ENCODE measurements at regions of chr1 and their contacts with region 1.

Region 1: DNA sequence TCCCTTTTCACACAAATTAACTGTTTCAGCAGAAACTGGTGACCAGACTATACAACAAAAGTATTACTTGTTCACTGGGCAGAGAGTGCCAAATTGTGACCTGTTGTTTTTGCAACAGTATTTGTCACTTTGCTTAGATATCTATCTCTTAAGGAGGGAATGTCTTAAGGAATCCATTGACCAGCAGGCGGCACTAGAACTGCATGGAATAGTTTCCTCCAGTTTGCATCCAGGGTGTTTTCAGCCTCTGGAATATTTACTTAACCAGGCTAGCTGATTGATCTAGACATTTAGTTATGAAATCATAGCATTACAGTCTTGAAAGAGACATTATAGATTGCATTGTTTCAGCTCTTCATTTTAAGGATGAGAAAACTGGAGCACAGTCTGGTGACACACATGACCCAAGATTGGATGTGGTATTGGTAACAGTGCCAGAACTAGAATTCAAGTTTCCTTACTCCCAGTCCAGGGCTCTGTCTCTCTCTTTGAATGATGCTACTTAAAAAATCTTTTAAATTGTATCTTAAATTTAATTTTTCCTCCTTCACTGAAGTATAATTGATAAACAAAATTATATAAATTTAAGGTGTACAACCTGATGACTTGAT is 16.9 kb downstream of the RPTN start:
- DNase-seq: peak; percentile 64 to 66
- H3K4me3 ChIP-seq: no peak overlapping the region
- H3K27ac ChIP-seq: no peak overlapping the region
- H3K4me1 ChIP-seq: no peaks in the 10 kb centered on the region
- H3K27me3 ChIP-seq: peaks cover 3% of the 10 kb centered on the region; the same call in 1 of the 2 replicates
- CTCF ChIP-seq: peak; percentile 92

Region 2: GRCh38 chr1:151968058-151968457 is 174.0 kb before region 1 on chr1:
- CTCF ChIA-PET with region 1: no interaction called
- POLR2A ChIA-PET with region 1: no interaction called
- intact Hi-C with region 1: no loop called
- DNase-seq: peak in 1 of 2 experiments; percentile 51
- H3K4me3 ChIP-seq: no peak overlapping the region
- H3K27ac ChIP-seq: no peak overlapping the region
- H3K4me1 ChIP-seq: peaks cover 60% of the 10 kb centered on the region
- H3K27me3 ChIP-seq: no peaks in the 10 kb centered on the region
- CTCF ChIP-seq: peak; percentile 70

Region 3: GRCh38 chr1:152198982-152199381 is 56.9 kb after region 1 on chr1:
- CTCF ChIA-PET with region 1: no interaction called
- POLR2A ChIA-PET with region 1: no interaction called
- intact Hi-C with region 1: no loop called
- DNase-seq: no peak
- H3K4me3 ChIP-seq: no peak overlapping the region
- H3K27ac ChIP-seq: no peak overlapping the region
- H3K4me1 ChIP-seq: no peaks in the 10 kb centered on the region
- H3K27me3 ChIP-seq: peaks cover 36% of the 10 kb centered on the region
- CTCF ChIP-seq: no peak

Region 4: DNA sequence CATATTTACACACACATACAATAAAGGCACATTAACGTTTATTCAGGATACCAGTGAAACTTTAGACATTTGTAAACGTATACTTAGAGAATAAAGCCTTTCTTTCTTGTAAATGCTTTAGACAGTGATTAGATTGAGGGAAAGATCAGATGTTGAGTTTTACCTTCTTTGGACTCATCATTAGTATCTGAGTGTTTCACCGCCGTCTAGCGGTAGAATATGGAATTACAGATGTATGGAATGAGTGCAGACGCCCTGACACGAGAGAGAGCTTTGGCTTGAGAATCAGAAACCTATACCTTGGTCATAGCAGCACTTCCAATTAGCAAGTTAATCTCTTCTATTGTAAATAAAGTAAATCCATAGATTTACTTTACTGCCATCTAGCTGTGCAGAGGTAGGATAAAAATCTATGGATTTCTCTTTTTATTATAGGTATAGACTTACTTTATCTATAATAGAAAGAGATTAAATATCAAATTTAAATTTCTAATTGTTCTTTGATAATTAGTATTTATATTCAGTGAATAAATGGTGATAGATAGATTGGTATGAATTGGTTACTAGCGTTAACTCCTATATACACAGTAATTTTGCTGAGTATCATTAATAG is 205.1 kb after region 1 on chr1:
- CTCF ChIA-PET with region 1: no interaction called
- POLR2A ChIA-PET with region 1: no interaction called
- intact Hi-C with region 1: loop called (anchors 1 kb)
- DNase-seq: peak; percentile 33 to 46
- H3K4me3 ChIP-seq: no peak overlapping the region
- H3K27ac ChIP-seq: no peak overlapping the region
- H3K4me1 ChIP-seq: no peaks in the 10 kb centered on the region
- H3K27me3 ChIP-seq: no peaks in the 10 kb centered on the region
- CTCF ChIP-seq: peak; percentile 92

Region 5: DNA sequence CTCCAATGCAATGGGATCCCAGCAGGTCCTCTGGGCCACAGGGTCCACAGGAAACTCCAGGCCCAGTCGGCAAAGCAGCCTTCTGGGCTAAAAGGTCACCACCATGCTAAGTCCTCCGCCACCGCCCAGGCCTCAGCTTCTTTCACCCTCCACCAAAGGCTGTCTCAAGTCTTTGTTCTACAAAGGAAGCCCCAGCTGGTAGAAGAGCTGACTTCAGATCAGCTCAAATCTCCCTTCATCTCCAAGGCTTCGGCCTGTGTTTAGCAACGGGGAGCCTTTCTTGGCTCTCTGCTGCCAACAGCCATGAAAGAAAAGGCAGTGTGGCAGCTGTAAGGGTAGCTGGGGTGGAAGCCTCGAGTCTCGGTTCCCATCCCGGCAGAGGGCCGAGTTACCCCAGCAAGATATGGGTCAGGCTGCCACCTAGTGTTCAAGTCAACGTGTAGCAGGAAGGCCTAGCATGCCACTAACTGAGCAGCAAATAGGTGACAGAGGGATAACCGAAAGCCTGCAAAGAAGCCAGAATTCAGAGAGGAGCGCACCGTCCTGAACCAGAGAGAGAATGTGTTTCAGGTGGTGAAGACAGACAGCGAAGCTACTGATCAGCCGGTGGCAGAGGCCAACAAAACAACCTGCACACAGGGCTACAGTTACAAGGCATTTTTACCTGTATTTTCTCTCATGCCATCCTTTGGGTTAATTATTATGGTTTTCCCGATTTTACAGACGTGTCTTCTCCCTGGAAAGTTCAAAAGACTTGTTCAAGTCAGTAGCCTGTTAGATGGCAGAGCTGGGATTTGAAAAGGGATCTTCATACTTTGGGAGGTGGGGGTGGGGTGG is 298.8 kb after region 1 on chr1:
- CTCF ChIA-PET with region 1: no interaction called
- POLR2A ChIA-PET with region 1: no interaction called
- intact Hi-C with region 1: loop called (anchors 1 kb)
- DNase-seq: peak in 1 of 2 experiments; percentile 55
- H3K4me3 ChIP-seq: no peak overlapping the region
- H3K27ac ChIP-seq: no peak overlapping the region
- H3K4me1 ChIP-seq: no peaks in the 10 kb centered on the region
- H3K27me3 ChIP-seq: peaks cover 30% of the 10 kb centered on the region
- CTCF ChIP-seq: peak; percentile 87

Region 6: DNA sequence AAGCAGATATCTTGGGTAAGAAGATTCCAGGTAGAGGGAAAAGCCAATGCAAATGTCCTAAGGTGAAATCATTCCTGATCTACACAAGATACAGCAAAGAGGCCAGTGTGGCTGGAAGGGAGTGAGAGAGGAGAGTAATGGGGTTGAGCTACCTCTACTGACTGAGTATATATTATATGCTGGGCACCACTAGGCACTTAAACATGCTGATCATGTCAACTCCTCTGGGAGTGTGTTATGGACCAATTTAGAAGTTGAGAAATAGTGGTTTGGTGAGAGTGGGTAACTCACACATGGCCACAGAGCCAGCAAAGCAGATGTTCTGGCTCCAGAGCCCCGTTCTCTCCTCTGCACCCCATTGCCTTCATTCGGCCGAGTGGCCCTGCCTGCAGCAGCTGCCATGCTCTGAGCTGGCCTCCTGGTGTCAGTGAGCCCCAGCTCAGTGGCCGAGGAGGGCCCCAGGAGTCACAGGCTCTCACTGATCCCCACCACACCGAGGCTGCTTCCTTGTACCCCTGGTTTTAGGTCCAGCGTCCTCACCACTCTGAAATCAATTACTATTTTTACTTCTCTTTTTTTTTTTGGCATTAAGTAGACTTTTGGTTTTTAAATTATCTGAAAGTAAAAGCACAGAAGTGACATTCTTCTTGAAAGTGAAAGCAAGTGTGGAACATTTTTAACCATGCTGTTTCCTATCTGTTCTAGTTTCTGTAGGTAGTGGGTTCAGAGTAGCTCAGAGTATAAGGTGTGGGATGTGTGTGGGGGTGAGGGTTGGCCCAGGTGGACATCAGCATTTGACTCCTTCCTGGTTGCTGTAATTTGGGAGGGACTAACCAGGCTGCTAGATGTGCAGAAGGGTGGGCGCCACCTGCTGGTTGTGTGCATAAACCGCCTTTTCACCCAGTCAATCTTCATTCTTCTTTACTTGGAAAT is 317.8 kb after region 1 on chr1:
- CTCF ChIA-PET with region 1: no interaction called
- POLR2A ChIA-PET with region 1: no interaction called
- intact Hi-C with region 1: loop called (anchors 5 kb)
- DNase-seq: peak; percentile 39
- H3K4me3 ChIP-seq: no peak overlapping the region
- H3K27ac ChIP-seq: no peak overlapping the region
- H3K4me1 ChIP-seq: no peaks in the 10 kb centered on the region
- H3K27me3 ChIP-seq: no peaks in the 10 kb centered on the region
- CTCF ChIP-seq: peak; percentile 72

Region 7: DNA sequence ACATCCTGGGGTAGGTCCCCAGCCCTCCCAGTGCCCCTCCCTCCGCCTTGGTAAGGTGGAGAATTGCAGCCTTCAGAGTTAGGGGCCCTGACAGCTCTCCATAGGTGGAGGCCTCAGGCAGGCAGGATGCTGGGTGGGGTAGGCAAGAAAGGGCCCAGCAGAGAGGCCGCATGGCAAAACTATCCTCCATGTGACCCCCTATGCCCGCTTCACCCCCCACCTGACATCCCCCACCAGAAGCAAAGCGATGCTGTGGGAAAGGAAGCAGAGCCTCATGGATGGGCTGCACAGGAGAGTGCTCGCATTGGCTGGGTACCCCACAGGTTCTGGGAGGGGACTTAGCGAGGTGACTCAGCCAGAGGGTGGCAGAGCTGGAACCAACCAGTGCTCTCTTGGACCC is 1217.2 kb after region 1 on chr1:
- CTCF ChIA-PET with region 1: interaction called, 11 read pairs
- POLR2A ChIA-PET with region 1: no interaction called
- intact Hi-C with region 1: no loop called
- DNase-seq: no peak
- H3K4me3 ChIP-seq: peak overlapping the region; percentile 93
- H3K27ac ChIP-seq: peak overlapping the region; percentile 98
- H3K4me1 ChIP-seq: peaks cover 70% of the 10 kb centered on the region
- H3K27me3 ChIP-seq: no peaks in the 10 kb centered on the region
- CTCF ChIP-seq: no peak

Measured in PC-9 (cell line).